ENCODE measurements at regions of chr15 and their contacts with region 1.

Region 1: GRCh38 chr15:27797765-27798164 is 301.4 kb downstream of the OCA2 start:
- DNase-seq: peak; percentile 37
- ATAC-seq: peak in 1 of 2 donors; percentile 69

Region 2: GRCh38 chr15:27418726-27419125 is 379.0 kb before region 1 on chr15:
- intact Hi-C with region 1: no loop called
- DNase-seq: no peak
- ATAC-seq: no peak

Region 3: DNA sequence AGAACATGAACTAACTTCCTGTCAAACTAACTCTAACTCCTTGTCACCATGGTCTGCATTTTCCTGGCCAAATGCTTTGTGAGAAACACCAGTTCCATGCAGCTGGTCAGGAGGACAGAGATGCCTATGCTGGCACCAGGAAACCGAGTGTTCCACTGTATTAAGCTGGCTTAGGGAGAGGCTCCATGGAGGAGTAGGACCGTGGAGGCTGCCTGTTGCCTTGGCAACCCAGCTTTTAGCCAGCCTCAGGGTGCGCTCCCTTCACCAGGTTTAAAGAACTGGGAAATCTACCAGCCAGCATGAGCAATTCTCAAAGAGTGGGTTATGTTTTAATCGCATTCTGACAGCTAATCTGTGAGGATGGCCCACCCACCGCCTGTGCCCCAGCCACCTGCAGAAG is 92.7 kb before region 1 on chr15:
- intact Hi-C with region 1: no loop called
- DNase-seq: no peak
- ATAC-seq: no peak

Region 4: DNA sequence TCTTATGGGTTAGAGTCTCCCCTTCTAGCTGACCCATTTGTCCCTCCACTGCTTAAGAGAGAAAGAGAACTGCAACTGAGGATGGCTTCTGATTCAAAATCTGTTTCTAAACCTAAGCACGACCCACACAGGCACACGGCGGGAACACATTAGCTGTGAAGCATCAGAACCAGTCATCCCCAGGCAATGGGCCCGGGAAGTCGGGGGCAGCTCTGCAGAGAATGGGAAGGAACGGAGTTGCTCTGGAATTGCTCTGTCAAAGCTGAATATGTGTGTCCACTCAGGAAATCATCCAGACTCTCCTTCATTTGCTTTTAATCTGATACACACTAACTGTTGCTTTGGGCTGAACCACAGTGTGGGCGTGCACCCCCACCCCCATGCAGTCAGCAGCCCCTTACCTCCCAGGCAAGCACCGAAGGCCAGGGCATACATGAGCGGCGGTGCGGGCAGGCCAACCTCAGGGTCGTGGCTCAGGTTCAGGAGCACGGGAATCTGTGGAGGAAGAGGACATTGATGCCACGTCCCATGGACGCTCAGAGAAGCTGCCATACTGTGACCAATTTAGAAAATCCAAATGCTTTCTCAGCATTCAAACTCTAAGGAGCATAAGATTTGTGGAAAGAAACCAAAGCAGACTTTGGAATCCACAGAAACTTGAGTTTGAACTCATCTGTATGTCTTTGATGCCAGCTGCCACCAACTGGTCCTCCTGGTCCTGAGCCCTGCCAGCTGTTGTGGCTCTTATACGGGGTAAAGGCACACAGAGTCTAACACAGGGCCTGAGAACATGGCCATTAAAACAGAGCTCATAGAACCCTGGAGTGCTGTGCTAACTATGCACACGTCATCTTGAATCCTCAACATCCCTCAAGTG is 53.5 kb after region 1 on chr15:
- intact Hi-C with region 1: loop called in 1 of 2 experiments (anchors 10 kb)
- DNase-seq: no peak
- ATAC-seq: no peak